Naive thymus-derived CD4-positive, alpha-beta T cell (primary cell): ENCODE measurements at regions of chrX and their contacts with region 1.

Region 1: DNA sequence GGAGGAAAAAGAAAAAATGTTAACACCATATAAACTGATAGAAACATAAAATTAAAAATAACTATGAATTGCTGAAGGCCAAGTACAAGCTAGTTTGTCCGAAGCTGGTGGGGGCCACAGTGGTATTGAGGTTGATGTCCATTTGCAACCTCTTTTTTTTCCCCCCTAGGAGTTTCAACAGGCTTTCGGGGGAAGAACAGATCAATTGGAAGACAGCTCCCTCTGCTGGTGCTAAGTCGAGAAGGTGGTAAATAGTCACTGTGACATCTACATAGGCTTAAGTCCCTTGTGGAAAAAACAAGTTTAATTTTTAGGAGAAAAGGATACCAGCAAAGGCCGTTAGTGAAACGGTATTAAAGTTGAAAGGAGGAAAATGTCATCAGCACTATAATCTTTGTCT is 115.7 kb upstream of the ZXDA start:
- DNase-seq: peak in 6 of 9 donors; percentile 4 to 43 (median 30)
- ATAC-seq: no peak
- H3K4me3 ChIP-seq: no peak overlapping the region
- H3K4me3 Mint-ChIP-seq: no peak overlapping the region
- H3K27ac ChIP-seq: no peak overlapping the region
- H3K27ac Mint-ChIP-seq: no peak overlapping the region
- H3K4me1 ChIP-seq: peaks cover 0 to 7% of the 10 kb centered on the region in 2 donors
- H3K4me1 Mint-ChIP-seq: peaks cover 0 to 34% (median 8%) of the 10 kb centered on the region in 7 donors
- H3K27me3 ChIP-seq: no peaks in the 10 kb centered on the region
- H3K27me3 Mint-ChIP-seq: no peaks in the 10 kb centered on the region

Region 2: GRCh38 chrX:56281789-56282188 is 1744.2 kb before region 1 on chrX:
- CTCF ChIA-PET with region 1: no interaction called
- POLR2A ChIA-PET with region 1: no interaction called
- intact Hi-C with region 1: loop called in 1 of 2 experiments (anchors 10 kb)
- DNase-seq: peak in 7 of 9 donors; percentile 15 to 60 (median 46)
- ATAC-seq: peak; percentile 55
- H3K4me3 ChIP-seq: no peak overlapping the region
- H3K4me3 Mint-ChIP-seq: peak overlapping the region in 3 of 10 donors; percentile 3 to 41 (median 14)
- H3K27ac ChIP-seq: no peak overlapping the region
- H3K27ac Mint-ChIP-seq: peak overlapping the region in 2 of 9 donors; percentile 40 to 70
- H3K4me1 ChIP-seq: peaks cover 0 to 3% of the 10 kb centered on the region in 2 donors
- H3K4me1 Mint-ChIP-seq: peaks cover 2 to 14% (median 10%) of the 10 kb centered on the region in 7 donors
- H3K27me3 ChIP-seq: no peaks in the 10 kb centered on the region
- H3K27me3 Mint-ChIP-seq: no peaks in the 10 kb centered on the region

Region 3: GRCh38 chrX:57573754-57574153 is 452.2 kb before region 1 on chrX:
- CTCF ChIA-PET with region 1: no interaction called
- POLR2A ChIA-PET with region 1: no interaction called
- intact Hi-C with region 1: loop called in 1 of 2 experiments (anchors 1 kb)
- DNase-seq: peak in 1 of 9 donors; percentile 10
- ATAC-seq: peak; percentile 56
- H3K4me3 ChIP-seq: no peak overlapping the region
- H3K4me3 Mint-ChIP-seq: no peak overlapping the region
- H3K27ac ChIP-seq: no peak overlapping the region
- H3K27ac Mint-ChIP-seq: peak overlapping the region in 1 of 9 donors; percentile 26
- H3K4me1 ChIP-seq: no peaks in the 10 kb centered on the region
- H3K4me1 Mint-ChIP-seq: peaks cover 0 to 4% (median 0%) of the 10 kb centered on the region in 7 donors
- H3K27me3 ChIP-seq: no peaks in the 10 kb centered on the region
- H3K27me3 Mint-ChIP-seq: peaks cover 0 to 7% (median 0%) of the 10 kb centered on the region in 5 donors

Region 4: DNA sequence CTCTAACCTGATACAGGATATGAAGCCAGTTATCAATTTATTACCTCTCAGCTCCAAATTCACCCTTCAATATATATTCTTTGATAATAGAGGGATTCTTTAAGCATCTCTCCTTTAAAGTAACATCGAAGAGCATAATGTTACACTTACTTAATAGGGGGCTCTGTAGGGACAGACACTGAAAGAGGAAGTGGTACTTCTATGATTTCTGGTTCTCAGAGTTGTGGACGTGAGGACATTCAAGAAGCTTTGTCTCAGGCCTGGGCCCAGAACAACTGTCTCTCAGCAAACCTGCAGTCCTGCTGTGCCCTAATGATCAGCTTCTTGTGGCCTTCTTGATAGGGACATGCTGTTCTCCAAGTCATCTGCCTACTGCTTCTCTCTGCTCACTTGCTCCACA is 438.4 kb before region 1 on chrX:
- CTCF ChIA-PET with region 1: no interaction called
- POLR2A ChIA-PET with region 1: no interaction called
- intact Hi-C with region 1: loop called in 1 of 2 experiments (anchors 10 kb)
- DNase-seq: no peak
- ATAC-seq: no peak
- H3K4me3 ChIP-seq: no peak overlapping the region
- H3K4me3 Mint-ChIP-seq: peak overlapping the region in 1 of 10 donors; percentile 45
- H3K27ac ChIP-seq: no peak overlapping the region
- H3K27ac Mint-ChIP-seq: no peak overlapping the region
- H3K4me1 ChIP-seq: peaks cover 6 to 8% of the 10 kb centered on the region in 2 donors
- H3K4me1 Mint-ChIP-seq: peaks cover 0 to 33% (median 10%) of the 10 kb centered on the region in 7 donors
- H3K27me3 ChIP-seq: no peaks in the 10 kb centered on the region
- H3K27me3 Mint-ChIP-seq: no peaks in the 10 kb centered on the region

Region 5: DNA sequence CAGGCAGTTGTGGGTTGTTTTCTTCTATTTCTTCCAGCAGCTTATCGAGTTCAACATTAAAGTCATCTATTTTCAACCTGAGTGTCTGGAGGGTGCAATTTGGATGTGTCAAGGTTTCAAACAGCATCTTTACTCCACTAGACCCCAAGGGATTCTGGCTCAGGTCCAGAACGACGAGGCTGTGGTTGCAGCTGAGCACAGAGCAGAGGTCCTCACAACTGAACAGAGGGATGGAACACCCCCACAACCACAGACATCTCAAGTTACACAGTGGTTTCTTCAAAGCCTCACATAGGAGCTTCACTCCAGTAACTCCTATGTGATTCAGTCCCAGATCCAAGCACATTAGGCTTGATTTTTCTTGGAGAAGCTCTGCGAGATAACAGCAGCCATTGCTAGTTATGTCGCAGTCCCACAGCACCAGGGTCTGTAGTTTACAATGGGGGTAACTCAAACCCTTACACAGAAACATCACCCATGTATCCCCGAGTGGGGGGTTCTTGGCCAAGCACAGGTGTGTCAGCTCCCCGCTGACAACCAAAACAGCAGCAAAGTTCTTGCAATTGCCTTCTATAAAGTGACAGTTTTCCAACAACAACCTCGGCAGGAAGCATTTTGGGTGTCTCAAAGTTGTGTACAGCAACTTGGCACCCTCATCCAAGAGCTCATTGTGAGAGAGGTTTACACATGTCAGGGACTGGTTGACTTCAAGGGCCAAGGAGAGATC is 348.7 kb before region 1 on chrX:
- CTCF ChIA-PET with region 1: no interaction called
- POLR2A ChIA-PET with region 1: no interaction called
- intact Hi-C with region 1: no loop called
- DNase-seq: no peak
- ATAC-seq: no peak
- H3K4me3 ChIP-seq: no peak overlapping the region
- H3K4me3 Mint-ChIP-seq: no peak overlapping the region
- H3K27ac ChIP-seq: no peak overlapping the region
- H3K27ac Mint-ChIP-seq: no peak overlapping the region
- H3K4me1 ChIP-seq: no peaks in the 10 kb centered on the region
- H3K4me1 Mint-ChIP-seq: peaks cover 0 to 1% (median 0%) of the 10 kb centered on the region in 7 donors
- H3K27me3 ChIP-seq: no peaks in the 10 kb centered on the region
- H3K27me3 Mint-ChIP-seq: no peaks in the 10 kb centered on the region

Region 6: GRCh38 chrX:57821703-57822375 is 204.1 kb before region 1 on chrX:
- CTCF ChIA-PET with region 1: interaction called, 3 read pairs
- POLR2A ChIA-PET with region 1: no interaction called
- intact Hi-C with region 1: loop called in 1 of 2 experiments (anchors 1 kb)
- DNase-seq: peak in 8 of 9 donors; percentile 20 to 59 (median 46)
- ATAC-seq: peak; percentile 63
- H3K4me3 ChIP-seq: no peak overlapping the region
- H3K4me3 Mint-ChIP-seq: peak overlapping the region in 2 of 10 donors; percentile 35 to 49
- H3K27ac ChIP-seq: no peak overlapping the region
- H3K27ac Mint-ChIP-seq: no peak overlapping the region
- H3K4me1 ChIP-seq: no peaks in the 10 kb centered on the region
- H3K4me1 Mint-ChIP-seq: peaks cover 0 to 5% (median 4%) of the 10 kb centered on the region in 7 donors
- H3K27me3 ChIP-seq: no peaks in the 10 kb centered on the region
- H3K27me3 Mint-ChIP-seq: peaks cover 0 to 5% (median 0%) of the 10 kb centered on the region in 5 donors

Region 7: GRCh38 chrX:57900975-57901374 is 125.0 kb before region 1 on chrX:
- CTCF ChIA-PET with region 1: no interaction called
- POLR2A ChIA-PET with region 1: no interaction called
- intact Hi-C with region 1: loop called in 1 of 2 experiments (anchors 10 kb)
- DNase-seq: no peak
- ATAC-seq: no peak
- H3K4me3 ChIP-seq: no peak overlapping the region
- H3K4me3 Mint-ChIP-seq: no peak overlapping the region
- H3K27ac ChIP-seq: no peak overlapping the region
- H3K27ac Mint-ChIP-seq: no peak overlapping the region
- H3K4me1 ChIP-seq: no peaks in the 10 kb centered on the region
- H3K4me1 Mint-ChIP-seq: peaks cover 1 to 15% (median 5%) of the 10 kb centered on the region in 7 donors
- H3K27me3 ChIP-seq: no peaks in the 10 kb centered on the region
- H3K27me3 Mint-ChIP-seq: no peaks in the 10 kb centered on the region

Region 8: DNA sequence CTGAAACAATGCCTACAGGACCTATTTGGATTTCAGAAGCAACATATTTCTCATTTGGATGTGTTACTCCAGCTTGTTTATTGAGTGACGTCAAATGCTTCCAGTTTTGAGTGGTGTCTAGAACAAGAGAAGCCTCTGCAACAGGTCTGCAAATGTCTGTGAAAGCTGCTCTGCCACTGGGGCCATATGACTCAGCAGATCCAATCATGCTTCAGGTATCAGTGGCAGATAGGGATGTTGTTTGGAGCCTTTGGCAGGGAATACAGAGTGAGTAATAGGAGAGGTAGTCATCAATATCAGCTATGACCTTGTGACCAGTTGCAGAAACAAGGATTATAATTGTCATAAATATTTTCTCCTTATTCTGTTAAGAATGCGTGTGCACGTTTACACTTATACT is 25.4 kb after region 1 on chrX:
- CTCF ChIA-PET with region 1: no interaction called
- POLR2A ChIA-PET with region 1: no interaction called
- intact Hi-C with region 1: no loop called
- DNase-seq: no peak
- ATAC-seq: no peak
- H3K4me3 ChIP-seq: no peak overlapping the region
- H3K4me3 Mint-ChIP-seq: no peak overlapping the region
- H3K27ac ChIP-seq: no peak overlapping the region
- H3K27ac Mint-ChIP-seq: no peak overlapping the region
- H3K4me1 ChIP-seq: no peaks in the 10 kb centered on the region
- H3K4me1 Mint-ChIP-seq: no peaks in the 10 kb centered on the region
- H3K27me3 ChIP-seq: no peaks in the 10 kb centered on the region
- H3K27me3 Mint-ChIP-seq: no peaks in the 10 kb centered on the region